H1 (cell line): ENCODE measurements at regions of chr10 and their contacts with region 1.

Region 1: DNA sequence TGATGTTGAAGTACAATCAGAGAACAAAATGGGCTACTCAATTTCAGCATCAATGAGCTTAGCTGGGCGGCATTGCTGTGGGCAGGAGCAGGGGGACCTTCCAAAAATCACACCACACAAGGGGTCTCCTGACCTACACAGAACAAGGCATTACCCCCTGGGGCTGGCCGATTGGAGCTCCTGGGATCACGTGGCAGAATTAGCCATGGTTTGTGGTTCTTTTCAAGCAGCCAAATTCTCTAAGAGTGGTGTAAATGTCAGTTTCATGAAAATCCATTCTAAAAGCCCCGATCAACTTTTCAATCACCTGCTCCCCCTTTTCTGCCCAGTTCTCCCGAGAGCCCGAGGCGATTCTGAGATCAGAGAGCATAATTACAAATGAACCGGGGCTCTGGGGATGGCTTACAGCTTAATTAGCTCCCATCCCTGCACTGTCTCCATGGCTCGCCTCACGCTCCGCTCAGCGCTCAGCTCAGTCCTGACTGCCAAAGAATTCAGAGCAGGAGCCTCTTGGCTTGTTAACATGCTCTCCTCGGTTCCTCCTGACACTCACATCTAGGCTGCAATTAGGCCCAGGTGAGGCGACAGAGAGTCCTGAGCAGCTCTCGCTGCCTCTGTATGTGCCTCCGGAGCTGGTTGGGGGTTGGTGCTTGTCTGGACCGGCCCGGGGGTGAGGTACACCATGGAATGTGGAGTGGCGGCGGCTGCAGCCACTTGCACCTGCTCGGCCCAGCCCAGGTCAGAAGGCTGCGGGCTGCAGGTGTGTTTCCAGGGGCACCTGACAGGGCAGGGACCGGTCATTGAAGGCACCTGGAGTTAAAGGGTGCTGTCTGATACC is 111.8 kb downstream of the WDR11 start:
- DNase-seq: peak in 1 of 2 experiments; percentile 68
- H3K4me3 ChIP-seq: no peak overlapping the region
- H3K27ac ChIP-seq: no peak overlapping the region
- H3K4me1 ChIP-seq: peaks cover 6 to 13% (median 8%) of the 10 kb centered on the region in 4 experiments; a peak in 6 of 7 replicates
- H3K27me3 ChIP-seq: no peaks in the 10 kb centered on the region; a peak in 1 of 7 replicates
- CTCF ChIP-seq: peak; percentile 14 to 33 (median 26); a peak in 3 of 4 replicates
- EP300 ChIP-seq: no peak
- POLR2A ChIP-seq: no peak
- RAD21 ChIP-seq: peak in 1 of 2 experiments; percentile 36; a peak in 1 of 4 replicates

Region 2: GRCh38 chr10:120819366-120819765 is 143.6 kb before region 1 on chr10:
- CTCF ChIA-PET with region 1: no interaction called
- POLR2A ChIA-PET with region 1: no interaction called
- DNase-seq: no peak
- H3K4me3 ChIP-seq: no peak overlapping the region
- H3K27ac ChIP-seq: no peak overlapping the region
- H3K4me1 ChIP-seq: peaks cover 0 to 5% (median 0%) of the 10 kb centered on the region in 4 experiments; a peak in 1 of 7 replicates
- H3K27me3 ChIP-seq: no peaks in the 10 kb centered on the region
- CTCF ChIP-seq: no peak
- EP300 ChIP-seq: no peak
- POLR2A ChIP-seq: no peak
- RAD21 ChIP-seq: no peak

Region 3: DNA sequence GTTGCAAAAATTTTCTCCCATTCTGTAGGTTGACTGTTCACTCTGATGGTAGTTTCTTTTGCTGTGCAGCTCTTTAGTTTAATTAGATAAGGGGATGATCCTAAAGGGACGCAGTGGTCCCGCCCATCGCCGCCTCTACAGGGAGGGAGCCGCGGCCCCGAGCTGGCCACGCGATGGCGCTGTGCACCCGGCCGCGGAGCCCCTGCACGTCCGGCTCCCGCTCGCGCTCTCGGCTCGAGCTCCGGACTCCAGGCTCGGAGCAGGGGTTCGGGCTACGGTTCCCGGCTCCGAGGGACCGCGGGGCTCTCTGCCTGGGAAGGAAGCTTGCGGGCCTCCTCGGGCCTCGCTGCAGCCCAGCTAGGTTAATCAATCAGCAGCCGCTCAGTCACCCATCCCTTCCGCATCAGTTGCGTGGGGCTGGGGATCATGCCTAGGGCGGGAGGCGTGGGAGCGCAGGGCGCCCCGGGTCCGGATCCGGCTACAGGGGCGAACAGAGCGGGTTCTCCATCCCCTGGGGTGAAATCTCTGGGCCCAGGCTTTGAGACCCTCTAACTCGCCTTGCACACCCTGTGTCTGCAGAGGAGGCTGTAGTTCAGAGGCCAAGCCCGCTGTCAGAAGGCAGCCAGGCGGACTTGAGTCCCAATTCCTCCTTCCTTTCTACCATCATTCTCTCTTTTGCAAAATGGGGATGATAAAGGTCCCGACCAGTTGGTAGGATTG is 13.9 kb before region 1 on chr10:
- CTCF ChIA-PET with region 1: interaction called, 16 read pairs
- POLR2A ChIA-PET with region 1: interaction called, 4 read pairs
- DNase-seq: peak; percentile 44 to 88
- H3K4me3 ChIP-seq: peak overlapping the region; percentile 16 to 68 (median 52)
- H3K27ac ChIP-seq: no peak overlapping the region
- H3K4me1 ChIP-seq: peaks cover 5 to 21% (median 13%) of the 10 kb centered on the region in 4 experiments
- H3K27me3 ChIP-seq: peaks cover 11 to 16% (median 13%) of the 10 kb centered on the region in 4 experiments
- CTCF ChIP-seq: peak; percentile 77 to 92 (median 90)
- EP300 ChIP-seq: no peak
- POLR2A ChIP-seq: no peak
- RAD21 ChIP-seq: peak; percentile 95 to 97

Region 4: GRCh38 chr10:120980279-120981255 is 17.6 kb after region 1 on chr10:
- CTCF ChIA-PET with region 1: interaction called, 15 read pairs
- POLR2A ChIA-PET with region 1: interaction called, 3 read pairs
- DNase-seq: no peak
- H3K4me3 ChIP-seq: peak overlapping the region; percentile 12 to 53 (median 38); a peak in 5 of 8 replicates
- H3K27ac ChIP-seq: no peak overlapping the region
- H3K4me1 ChIP-seq: peaks cover 15 to 27% (median 19%) of the 10 kb centered on the region in 4 experiments
- H3K27me3 ChIP-seq: peaks cover 2 to 21% (median 20%) of the 10 kb centered on the region in 4 experiments
- CTCF ChIP-seq: no peak
- EP300 ChIP-seq: no peak
- POLR2A ChIP-seq: no peak
- RAD21 ChIP-seq: no peak